ENCODE measurements at regions of chr1 and their contacts with region 1.

Region 1: GRCh38 chr1:86472767-86473166 is 4.0 kb downstream of the CLCA1 start:
- DNase-seq: no peak
- ATAC-seq: no peak
- H3K4me3 Mint-ChIP-seq: no peak overlapping the region
- H3K27ac Mint-ChIP-seq: no peak overlapping the region
- H3K4me1 Mint-ChIP-seq: no peaks in the 10 kb centered on the region
- H3K27me3 Mint-ChIP-seq: peaks cover 23% of the 10 kb centered on the region

Region 2: GRCh38 chr1:86460998-86461397 is 11.8 kb before region 1 on chr1:
- CTCF ChIA-PET with region 1: interaction called, 14 read pairs
- DNase-seq: no peak
- ATAC-seq: no peak
- H3K4me3 Mint-ChIP-seq: no peak overlapping the region
- H3K27ac Mint-ChIP-seq: no peak overlapping the region
- H3K4me1 Mint-ChIP-seq: no peaks in the 10 kb centered on the region
- H3K27me3 Mint-ChIP-seq: peaks cover 15% of the 10 kb centered on the region

Region 3: GRCh38 chr1:86567878-86568277 is 95.1 kb after region 1 on chr1:
- CTCF ChIA-PET with region 1: no interaction called
- DNase-seq: no peak
- ATAC-seq: no peak
- H3K4me3 Mint-ChIP-seq: no peak overlapping the region
- H3K27ac Mint-ChIP-seq: no peak overlapping the region
- H3K4me1 Mint-ChIP-seq: no peaks in the 10 kb centered on the region
- H3K27me3 Mint-ChIP-seq: peaks cover 6% of the 10 kb centered on the region

Measured in activated CD8-positive, alpha-beta memory T cell treated with anti-CD3 and anti-CD28 coated beads, Interleukin-2, amount 10 ng/mL, durations not matched to agents 7 days and 5 days (primary cell).